Right lobe of liver (tissue), 6 donors: ENCODE measurements at regions of chr20 and their contacts with region 1.

Region 1: GRCh38 chr20:13121840-13122515 is 99.1 kb upstream of the ISM1 start:
- DNase-seq: no peak
- ATAC-seq: no peak
- H3K4me3 ChIP-seq: no peak overlapping the region
- H3K27ac ChIP-seq: no peak overlapping the region
- H3K4me1 ChIP-seq: no peaks in the 10 kb centered on the region
- H3K27me3 ChIP-seq: no peaks in the 10 kb centered on the region
- CTCF ChIP-seq: no peak
- POLR2A ChIP-seq: no peak

Region 2: GRCh38 chr20:13061381-13061780 is 60.6 kb before region 1 on chr20:
- intact Hi-C with region 1: no loop called
- DNase-seq: no peak
- ATAC-seq: no peak
- H3K4me3 ChIP-seq: no peak overlapping the region
- H3K27ac ChIP-seq: no peak overlapping the region
- H3K4me1 ChIP-seq: no peaks in the 10 kb centered on the region
- H3K27me3 ChIP-seq: no peaks in the 10 kb centered on the region
- CTCF ChIP-seq: no peak
- POLR2A ChIP-seq: no peak

Region 3: GRCh38 chr20:13221673-13222318 is 99.8 kb after region 1 on chr20:
- intact Hi-C with region 1: no loop called
- DNase-seq: peak; percentile 66 to 78 (median 71)
- ATAC-seq: peak; percentile 54 to 73 (median 64)
- H3K4me3 ChIP-seq: peak overlapping the region; percentile 34 to 70 (median 54)
- H3K27ac ChIP-seq: peak overlapping the region in 1 of 3 donors; percentile 63
- H3K4me1 ChIP-seq: peaks cover 0 to 13% (median 6%) of the 10 kb centered on the region in 4 donors
- H3K27me3 ChIP-seq: no peaks in the 10 kb centered on the region
- CTCF ChIP-seq: peak in 1 of 4 donors; percentile 27
- POLR2A ChIP-seq: no peak

Region 4: DNA sequence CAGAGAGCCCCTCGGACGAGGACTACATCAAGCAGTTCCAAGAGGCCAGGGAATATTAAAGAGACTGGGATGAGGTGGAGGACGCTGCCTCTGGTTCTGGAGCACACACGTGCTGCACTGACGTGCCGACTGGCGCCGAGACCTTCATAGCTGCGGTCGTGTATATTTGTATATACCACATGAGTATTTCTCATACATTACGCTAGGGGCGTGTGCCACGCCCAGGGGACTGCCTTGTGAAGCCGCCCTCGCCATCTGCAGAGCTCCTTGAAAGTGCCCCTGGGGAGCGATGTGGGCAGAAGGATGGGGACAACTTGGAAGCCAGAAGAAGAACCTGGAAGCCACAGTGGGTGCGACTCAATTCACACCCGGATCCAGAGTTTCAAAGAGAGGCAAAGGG is 177.4 kb after region 1 on chr20:
- intact Hi-C with region 1: loop called in 1 of 2 experiments (anchors 10 kb)
- DNase-seq: no peak
- ATAC-seq: no peak
- H3K4me3 ChIP-seq: no peak overlapping the region
- H3K27ac ChIP-seq: no peak overlapping the region
- H3K4me1 ChIP-seq: peaks cover 0 to 6% (median 0%) of the 10 kb centered on the region in 4 donors
- H3K27me3 ChIP-seq: no peaks in the 10 kb centered on the region
- CTCF ChIP-seq: no peak
- POLR2A ChIP-seq: no peak